PC-9 (cell line): ENCODE measurements at regions of chr16 and their contacts with region 1.

Region 1: GRCh38 chr16:67100569-67101310 is 9.0 kb upstream of the PHAF1 start:
- DNase-seq: no peak
- H3K4me3 ChIP-seq: no peak overlapping the region
- H3K27ac ChIP-seq: no peak overlapping the region
- H3K4me1 ChIP-seq: no peaks in the 10 kb centered on the region
- H3K27me3 ChIP-seq: no peaks in the 10 kb centered on the region
- CTCF ChIP-seq: peak; percentile 61

Region 2: GRCh38 chr16:66574081-66574480 is 526.7 kb before region 1 on chr16:
- CTCF ChIA-PET with region 1: no interaction called
- POLR2A ChIA-PET with region 1: interaction called, 14 read pairs
- intact Hi-C with region 1: no loop called
- DNase-seq: no peak
- H3K4me3 ChIP-seq: no peak overlapping the region
- H3K27ac ChIP-seq: no peak overlapping the region
- H3K4me1 ChIP-seq: peaks cover 15% of the 10 kb centered on the region
- H3K27me3 ChIP-seq: no peaks in the 10 kb centered on the region
- CTCF ChIP-seq: no peak

Region 3: GRCh38 chr16:66881014-66881417 is 219.7 kb before region 1 on chr16:
- CTCF ChIA-PET with region 1: no interaction called
- POLR2A ChIA-PET with region 1: no interaction called
- intact Hi-C with region 1: no loop called
- DNase-seq: no peak
- H3K4me3 ChIP-seq: peak overlapping the region; percentile 99
- H3K27ac ChIP-seq: no peak overlapping the region
- H3K4me1 ChIP-seq: peaks cover 16% of the 10 kb centered on the region
- H3K27me3 ChIP-seq: no peaks in the 10 kb centered on the region
- CTCF ChIP-seq: no peak

Region 4: DNA sequence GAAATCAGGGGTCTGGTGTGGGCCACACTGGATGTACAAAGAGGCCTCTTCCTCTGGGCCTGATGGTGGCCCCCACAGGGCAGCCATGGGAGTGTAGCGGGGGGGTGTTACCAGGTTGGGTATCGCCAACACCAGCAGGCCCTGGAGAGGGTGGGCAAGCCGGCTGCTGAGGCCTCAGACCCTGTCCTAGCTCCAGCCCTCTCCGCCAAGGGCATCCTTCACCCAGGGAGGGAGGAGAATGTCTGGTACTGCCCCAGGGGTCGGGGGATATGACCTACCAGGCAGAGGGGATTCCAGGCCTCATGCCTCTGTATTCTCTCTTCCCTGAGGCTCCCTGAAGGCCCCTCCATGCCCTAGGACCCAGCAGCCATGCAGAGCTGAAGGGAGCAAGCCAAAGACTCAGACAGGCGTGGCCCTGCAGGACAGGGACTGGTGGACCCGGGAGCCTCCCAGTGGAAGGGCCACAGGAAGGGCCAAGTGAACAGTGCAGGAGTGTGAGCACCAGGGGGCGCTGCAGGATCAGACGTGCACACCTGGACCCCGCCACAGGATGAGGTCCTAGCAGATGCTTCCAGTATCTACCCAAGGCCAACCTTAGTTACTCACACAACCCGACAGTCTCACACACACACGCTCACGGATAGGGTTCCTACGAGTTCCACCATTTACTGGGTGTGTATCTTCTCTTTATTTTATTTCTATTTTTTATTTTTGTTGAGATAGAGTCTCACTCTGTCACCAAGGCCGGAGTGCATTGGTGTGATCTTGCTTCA is 123.2 kb before region 1 on chr16:
- CTCF ChIA-PET with region 1: no interaction called
- POLR2A ChIA-PET with region 1: no interaction called
- intact Hi-C with region 1: loop called (anchors 2 kb)
- DNase-seq: peak; percentile 62 to 82
- H3K4me3 ChIP-seq: no peak overlapping the region
- H3K27ac ChIP-seq: no peak overlapping the region
- H3K4me1 ChIP-seq: no peaks in the 10 kb centered on the region
- H3K27me3 ChIP-seq: no peaks in the 10 kb centered on the region
- CTCF ChIP-seq: peak; percentile 96

Region 5: DNA sequence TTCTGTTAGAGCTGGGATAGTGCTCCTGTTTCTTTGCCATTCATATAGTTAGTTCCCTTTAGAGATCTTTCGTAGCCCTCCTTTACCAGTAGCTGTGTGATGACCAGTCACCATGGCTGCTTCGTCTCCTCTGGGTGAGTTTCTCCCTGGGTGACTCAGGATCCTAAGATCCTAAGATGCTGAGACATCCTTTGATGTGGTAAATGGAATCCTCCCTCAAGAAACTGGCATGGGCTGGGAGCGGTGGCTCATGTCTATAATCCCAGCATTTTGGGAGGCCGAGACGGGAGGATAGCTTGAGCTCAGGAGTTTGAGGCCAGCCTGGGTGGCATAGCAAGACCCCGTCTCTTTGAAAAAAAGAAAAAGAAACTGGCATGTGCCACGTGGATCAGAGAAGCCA is 14.9 kb after region 1 on chr16:
- CTCF ChIA-PET with region 1: no interaction called
- POLR2A ChIA-PET with region 1: no interaction called
- intact Hi-C with region 1: no loop called
- DNase-seq: peak in 1 of 2 experiments; percentile 47
- H3K4me3 ChIP-seq: no peak overlapping the region
- H3K27ac ChIP-seq: no peak overlapping the region
- H3K4me1 ChIP-seq: peaks cover 35% of the 10 kb centered on the region
- H3K27me3 ChIP-seq: no peaks in the 10 kb centered on the region
- CTCF ChIP-seq: no peak

Region 6: DNA sequence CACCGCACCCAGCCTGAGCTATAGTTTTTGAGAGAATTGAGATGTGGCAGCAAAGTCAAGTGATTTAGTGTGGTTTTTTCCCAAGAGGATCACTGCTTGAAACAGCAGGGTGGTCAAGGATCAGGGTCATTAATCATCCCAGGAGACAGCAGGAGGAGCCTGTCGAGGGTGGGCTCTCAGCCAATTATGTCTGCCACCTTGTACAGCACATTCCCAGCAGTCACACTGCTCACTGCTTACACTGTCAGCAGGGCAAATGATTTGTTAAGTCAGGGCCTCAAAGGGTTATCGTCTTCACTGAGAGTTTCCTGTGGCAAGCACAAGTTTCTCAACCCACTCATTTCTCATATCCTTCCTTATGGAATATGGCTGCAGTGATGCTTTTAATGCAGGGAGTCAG is 36.9 kb after region 1 on chr16:
- CTCF ChIA-PET with region 1: no interaction called
- POLR2A ChIA-PET with region 1: interaction called, 9 read pairs
- intact Hi-C with region 1: loop called (anchors 1 kb)
- DNase-seq: no peak
- H3K4me3 ChIP-seq: no peak overlapping the region
- H3K27ac ChIP-seq: no peak overlapping the region
- H3K4me1 ChIP-seq: no peaks in the 10 kb centered on the region
- H3K27me3 ChIP-seq: no peaks in the 10 kb centered on the region
- CTCF ChIP-seq: no peak